Caco-2 (cell line): ENCODE measurements at regions of chr10 and their contacts with region 1.

Region 1: DNA sequence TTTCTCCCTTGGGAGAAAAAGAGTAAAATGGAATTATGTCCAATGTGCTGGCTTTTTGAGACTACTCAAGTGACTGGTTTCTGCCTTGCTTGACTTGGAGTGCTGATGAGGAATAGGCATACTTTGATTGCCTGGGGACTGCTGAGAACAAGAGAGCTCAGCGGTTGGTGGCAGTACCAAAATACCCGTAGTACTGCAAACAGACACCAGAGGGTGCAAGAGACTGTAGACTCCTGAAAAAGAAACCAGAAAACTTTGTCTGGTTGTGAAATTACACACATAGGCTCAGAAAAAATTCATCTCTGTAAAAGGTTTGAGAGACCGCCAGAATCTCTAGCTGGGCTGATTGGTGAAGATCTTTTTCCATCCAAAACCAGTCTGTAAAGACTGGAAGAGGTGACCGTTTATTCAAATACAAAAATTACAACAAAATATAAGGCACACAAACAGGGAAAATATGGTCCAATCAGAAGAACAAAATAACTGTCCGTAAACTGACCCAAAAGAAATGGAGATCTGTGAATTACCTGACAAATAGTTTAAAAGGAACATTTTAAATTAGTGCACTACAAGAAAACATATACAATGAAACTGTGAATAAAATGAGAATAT is 18.5 kb downstream of the BICC1 start:
- DNase-seq: peak; percentile 82 to 93
- H3K4me3 ChIP-seq: no peak overlapping the region
- H3K4me3 Mint-ChIP-seq: no peak overlapping the region
- H3K27ac Mint-ChIP-seq: peak overlapping the region; percentile 15
- H3K4me1 ChIP-seq: peaks cover 8% of the 10 kb centered on the region; the same call in 1 of the 2 replicates
- H3K4me1 Mint-ChIP-seq: peaks cover 28% of the 10 kb centered on the region
- H3K27me3 ChIP-seq: no peaks in the 10 kb centered on the region
- H3K27me3 Mint-ChIP-seq: no peaks in the 10 kb centered on the region
- CTCF ChIP-seq: peak; percentile 92 to 97

Region 2: GRCh38 chr10:58299580-58299979 is 231.6 kb before region 1 on chr10:
- CTCF ChIA-PET with region 1: no interaction called
- POLR2A ChIA-PET with region 1: no interaction called
- intact Hi-C with region 1: loop called (anchors 5 kb)
- DNase-seq: peak; percentile 83 to 90
- H3K4me3 ChIP-seq: peak overlapping the region; percentile 3; the same call in 1 of the 2 replicates
- H3K4me3 Mint-ChIP-seq: peak overlapping the region; percentile 37
- H3K27ac Mint-ChIP-seq: no peak overlapping the region
- H3K4me1 ChIP-seq: peaks cover 10% of the 10 kb centered on the region
- H3K4me1 Mint-ChIP-seq: peaks cover 9% of the 10 kb centered on the region
- H3K27me3 ChIP-seq: no peaks in the 10 kb centered on the region
- H3K27me3 Mint-ChIP-seq: no peaks in the 10 kb centered on the region
- CTCF ChIP-seq: peak; percentile 97 to 99

Region 3: DNA sequence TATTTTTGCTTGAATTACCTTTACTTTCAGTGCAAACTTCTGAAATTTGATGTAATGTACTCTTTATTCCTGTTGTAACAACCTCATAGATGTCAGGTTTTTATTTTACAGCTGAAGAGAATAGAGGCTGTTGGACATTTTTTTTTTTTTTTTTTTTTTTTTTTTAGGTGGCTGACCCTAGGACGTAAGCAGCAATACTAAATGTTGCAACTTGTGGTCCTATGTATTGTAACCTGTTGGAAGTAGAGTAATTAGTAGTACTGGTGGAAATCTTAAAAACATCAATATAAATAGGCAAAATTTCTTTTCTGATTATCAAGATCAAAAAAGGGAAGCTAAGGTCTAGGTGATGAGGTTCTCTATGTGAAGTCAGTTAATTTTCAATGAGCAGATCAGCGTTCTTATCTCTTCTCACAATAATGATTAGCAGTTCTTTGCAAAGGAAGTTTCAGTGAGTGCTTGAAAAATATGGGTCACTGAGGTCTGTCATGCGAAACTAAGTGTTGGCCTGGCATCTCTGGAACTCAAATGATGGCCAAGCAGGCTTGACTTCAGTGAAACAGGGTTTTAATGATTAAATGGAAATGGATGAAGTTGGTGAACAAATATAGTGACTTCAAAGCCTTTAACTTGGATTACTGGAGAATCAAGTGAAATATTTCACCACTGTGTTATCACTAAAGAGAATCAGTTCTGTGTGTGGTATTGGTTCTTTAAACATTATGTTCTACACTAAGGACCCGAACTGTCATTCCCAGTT is 24.2 kb after region 1 on chr10:
- CTCF ChIA-PET with region 1: interaction called, 3 read pairs
- POLR2A ChIA-PET with region 1: no interaction called
- intact Hi-C with region 1: loop called (anchors 1 kb)
- DNase-seq: peak; percentile 87 to 90
- H3K4me3 ChIP-seq: no peak overlapping the region
- H3K4me3 Mint-ChIP-seq: peak overlapping the region; percentile 54
- H3K27ac Mint-ChIP-seq: peak overlapping the region; percentile 27
- H3K4me1 ChIP-seq: peaks cover 74% of the 10 kb centered on the region
- H3K4me1 Mint-ChIP-seq: peaks cover 79% of the 10 kb centered on the region
- H3K27me3 ChIP-seq: no peaks in the 10 kb centered on the region
- H3K27me3 Mint-ChIP-seq: no peaks in the 10 kb centered on the region
- CTCF ChIP-seq: no peak

Region 4: DNA sequence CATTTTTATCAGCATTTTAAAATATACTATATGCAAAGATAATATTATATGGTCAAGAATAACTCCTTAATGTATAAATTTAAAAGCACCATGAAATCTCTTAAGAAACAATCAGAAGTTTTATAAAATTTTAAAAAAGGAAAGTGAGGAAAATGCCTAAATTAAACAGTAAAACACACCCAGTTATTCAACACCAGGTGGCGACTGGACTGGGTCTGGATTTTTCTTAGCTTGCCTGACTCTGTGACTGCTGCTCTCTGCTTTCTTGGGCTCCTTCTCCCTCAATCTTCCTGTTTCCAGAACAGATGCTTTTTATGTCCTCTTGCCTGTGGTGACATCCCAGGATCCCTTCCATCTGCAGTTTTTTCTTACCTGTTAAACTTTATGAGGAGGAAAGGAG is 181.8 kb after region 1 on chr10:
- CTCF ChIA-PET with region 1: interaction called, 7 read pairs
- POLR2A ChIA-PET with region 1: no interaction called
- intact Hi-C with region 1: loop called (anchors 5 kb)
- DNase-seq: peak in 1 of 2 experiments; percentile 22
- H3K4me3 ChIP-seq: no peak overlapping the region
- H3K4me3 Mint-ChIP-seq: no peak overlapping the region
- H3K27ac Mint-ChIP-seq: no peak overlapping the region
- H3K4me1 ChIP-seq: no peaks in the 10 kb centered on the region
- H3K4me1 Mint-ChIP-seq: no peaks in the 10 kb centered on the region
- H3K27me3 ChIP-seq: no peaks in the 10 kb centered on the region
- H3K27me3 Mint-ChIP-seq: no peaks in the 10 kb centered on the region
- CTCF ChIP-seq: peak; percentile 38 to 49

Region 5: GRCh38 chr10:58755677-58756076 is 224.5 kb after region 1 on chr10:
- CTCF ChIA-PET with region 1: no interaction called
- POLR2A ChIA-PET with region 1: no interaction called
- intact Hi-C with region 1: loop called (anchors 5 kb)
- DNase-seq: peak in 1 of 2 experiments; percentile 24
- H3K4me3 ChIP-seq: no peak overlapping the region
- H3K4me3 Mint-ChIP-seq: peak overlapping the region; percentile 3
- H3K27ac Mint-ChIP-seq: no peak overlapping the region
- H3K4me1 ChIP-seq: peaks cover 29% of the 10 kb centered on the region
- H3K4me1 Mint-ChIP-seq: peaks cover 34% of the 10 kb centered on the region
- H3K27me3 ChIP-seq: no peaks in the 10 kb centered on the region
- H3K27me3 Mint-ChIP-seq: no peaks in the 10 kb centered on the region
- CTCF ChIP-seq: no peak